ENCODE measurements at regions of chr16 and their contacts with region 1.

Region 1: GRCh38 chr16:85673529-85674417 is 15.0 kb downstream of the GINS2 start:
- DNase-seq: no peak
- H3K4me3 ChIP-seq: no peak overlapping the region
- CTCF ChIP-seq: no peak

Region 2: DNA sequence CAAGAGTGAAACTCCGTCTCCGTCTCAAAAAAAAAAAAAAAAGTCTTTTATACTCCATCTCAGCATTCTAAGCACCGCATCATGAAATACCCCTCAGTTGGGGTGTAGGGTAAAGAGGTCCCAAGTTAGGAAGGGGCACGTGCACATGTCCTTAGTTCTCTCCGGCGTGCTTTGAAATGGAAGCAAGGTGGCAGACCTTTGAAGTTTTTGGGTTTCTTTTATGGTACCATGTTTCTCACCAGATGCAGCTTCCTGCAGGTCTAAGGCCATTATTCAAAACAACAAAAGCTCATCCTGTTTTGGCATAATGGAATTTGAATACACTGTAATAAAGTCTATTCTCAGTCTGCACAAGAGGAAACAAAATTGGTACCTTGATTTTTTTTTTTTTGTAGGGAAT is 116.0 kb after region 1 on chr16:
- in situ Hi-C with region 1: loop called (anchors 5 kb)
- DNase-seq: no peak
- H3K4me3 ChIP-seq: no peak overlapping the region
- CTCF ChIP-seq: no peak